HepG2 (cell line): ENCODE measurements at regions of chr7 and their contacts with region 1.

Region 1: DNA sequence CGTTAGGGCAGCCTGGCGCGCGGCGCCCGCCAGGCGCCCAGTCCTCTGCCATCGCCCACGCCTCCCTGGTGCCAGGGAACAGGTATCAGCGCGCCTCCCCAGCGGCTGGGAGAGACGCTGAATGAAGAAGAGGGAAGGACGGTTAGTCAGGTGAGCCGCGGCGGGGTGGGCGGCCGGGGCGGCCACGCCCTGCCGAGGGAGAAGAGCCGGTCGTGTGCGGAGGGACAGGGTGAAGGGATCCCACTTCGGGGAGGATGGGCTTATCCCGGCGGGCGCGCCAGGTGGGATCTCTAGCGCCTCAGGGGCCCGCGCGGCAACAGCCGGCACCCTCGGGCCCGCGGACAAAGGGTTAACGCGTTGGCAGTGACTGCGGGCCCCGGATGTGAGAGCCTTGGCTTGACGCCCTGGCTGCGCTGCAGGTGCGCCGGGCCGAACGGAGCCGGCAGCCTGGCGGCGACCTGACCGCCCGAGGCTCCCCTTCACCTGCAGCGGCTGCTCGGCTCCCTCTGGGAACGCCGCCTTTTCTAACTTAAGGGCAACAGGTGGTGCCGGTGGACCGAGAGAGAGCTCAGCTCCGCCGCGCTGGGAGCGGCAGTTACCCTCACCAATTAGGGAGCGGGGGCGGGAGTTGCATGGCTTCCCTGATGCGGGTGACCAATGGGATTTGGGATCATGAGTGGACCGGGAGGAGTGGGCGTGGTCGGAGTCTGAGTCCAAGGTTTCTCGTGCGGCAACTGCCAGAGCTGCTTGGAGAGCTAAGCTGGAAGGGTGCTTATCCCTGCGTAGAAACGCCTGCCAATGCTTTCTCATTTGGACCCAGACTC is at the start of gene ARL4A:
- DNase-seq: peak; percentile 98
- ATAC-seq: peak; percentile 96
- H3K4me3 ChIP-seq: peak within 1 kb of the TSS; percentile 86 to 95 (median 92)
- H3K27ac ChIP-seq: peak within 1 kb of the TSS; percentile 92
- H3K4me1 ChIP-seq: peaks cover 42% of the 10 kb centered on the region
- H3K27me3 ChIP-seq: no peaks in the 10 kb centered on the region
- CTCF ChIP-seq: peak; percentile 91
- EP300 ChIP-seq: no peak; a peak in 1 of 4 replicates
- POLR2A ChIP-seq: peak; percentile 97 to 98
- RAD21 ChIP-seq: peak; percentile 79
- total RNA-seq, gene ARL4A: 25.6 and 29.3 TPM in 2 replicates

Region 2: GRCh38 chr7:12524794-12525386 is 162.2 kb before region 1 on chr7:
- CTCF ChIA-PET with region 1: no interaction called
- POLR2A ChIA-PET with region 1: no interaction called
- in situ Hi-C with region 1: no loop called
- intact Hi-C with region 1: loop called (anchors 2 kb)
- DNase-seq: peak; percentile 33
- ATAC-seq: no peak
- H3K4me3 ChIP-seq: no peak overlapping the region
- H3K27ac ChIP-seq: no peak overlapping the region
- H3K4me1 ChIP-seq: no peaks in the 10 kb centered on the region
- H3K27me3 ChIP-seq: no peaks in the 10 kb centered on the region
- CTCF ChIP-seq: peak; percentile 62
- EP300 ChIP-seq: no peak
- POLR2A ChIP-seq: no peak
- RAD21 ChIP-seq: no peak

Region 3: GRCh38 chr7:12942609-12943008 is 255.5 kb after region 1 on chr7:
- CTCF ChIA-PET with region 1: no interaction called
- POLR2A ChIA-PET with region 1: interaction called, 5 read pairs
- in situ Hi-C with region 1: no loop called
- intact Hi-C with region 1: loop called (anchors 2 kb)
- DNase-seq: peak; percentile 92
- ATAC-seq: peak; percentile 97
- H3K4me3 ChIP-seq: peak overlapping the region; percentile 1 to 40 (median 19); a peak in 2 of 6 replicates
- H3K27ac ChIP-seq: peak overlapping the region; percentile 71
- H3K4me1 ChIP-seq: peaks cover 52% of the 10 kb centered on the region
- H3K27me3 ChIP-seq: no peaks in the 10 kb centered on the region
- CTCF ChIP-seq: no peak
- EP300 ChIP-seq: peak in 1 of 2 experiments; percentile 92; a peak in 2 of 4 replicates
- POLR2A ChIP-seq: no peak
- RAD21 ChIP-seq: no peak

Region 4: DNA sequence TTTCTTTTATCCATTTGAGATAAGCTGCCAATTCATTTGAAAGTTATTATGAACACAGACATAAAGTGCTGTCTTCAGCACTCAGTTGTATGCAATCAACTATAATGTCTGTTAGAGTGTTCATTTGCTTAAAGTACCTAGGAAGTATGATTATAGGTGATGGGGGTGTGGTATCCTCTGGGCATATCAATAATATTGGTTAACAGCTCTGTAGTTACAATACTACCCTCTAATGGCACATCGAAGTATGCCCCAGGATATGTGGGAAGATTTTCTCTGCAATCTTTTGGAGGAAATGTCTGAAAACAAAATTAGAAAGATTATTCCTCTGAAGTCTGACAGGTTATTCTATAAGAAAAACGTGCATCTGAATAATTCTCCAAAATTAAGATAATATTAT is 430.0 kb after region 1 on chr7:
- CTCF ChIA-PET with region 1: interaction called, 3 read pairs
- POLR2A ChIA-PET with region 1: interaction called, 4 read pairs
- in situ Hi-C with region 1: loop called (anchors 25 kb)
- intact Hi-C with region 1: loop called (anchors 1 kb)
- DNase-seq: peak; percentile 35
- ATAC-seq: peak; percentile 69
- H3K4me3 ChIP-seq: no peak overlapping the region
- H3K27ac ChIP-seq: no peak overlapping the region
- H3K4me1 ChIP-seq: peaks cover 10% of the 10 kb centered on the region; the same call in 1 of the 2 replicates
- H3K27me3 ChIP-seq: no peaks in the 10 kb centered on the region
- CTCF ChIP-seq: peak; percentile 70
- EP300 ChIP-seq: no peak
- POLR2A ChIP-seq: no peak
- RAD21 ChIP-seq: peak; percentile 65; the same call in 1 of the 2 replicates

Region 5: DNA sequence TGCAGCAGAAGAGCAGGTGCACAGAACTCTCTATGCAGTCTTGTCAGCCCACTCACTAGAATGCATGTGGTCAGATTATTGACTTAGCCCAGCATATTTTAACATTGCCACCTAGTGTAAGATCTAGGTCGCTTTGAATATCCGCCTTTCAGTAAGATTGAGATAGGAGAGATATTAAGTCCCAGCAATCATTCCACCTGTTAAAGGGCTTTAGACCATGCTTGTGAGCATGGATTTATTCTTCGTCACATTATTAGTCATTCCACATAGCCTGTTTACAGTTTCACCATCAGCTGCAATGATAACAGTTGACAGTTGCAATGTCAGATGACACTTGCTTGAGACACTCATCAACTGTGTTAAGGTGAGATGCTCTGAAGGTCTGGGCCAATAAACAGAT is 492.0 kb after region 1 on chr7:
- CTCF ChIA-PET with region 1: no interaction called
- POLR2A ChIA-PET with region 1: interaction called, 5 read pairs
- in situ Hi-C with region 1: loop called (anchors 10 kb)
- intact Hi-C with region 1: loop called (anchors 1 kb)
- DNase-seq: peak; percentile 30
- ATAC-seq: peak; percentile 84
- H3K4me3 ChIP-seq: no peak overlapping the region
- H3K27ac ChIP-seq: no peak overlapping the region
- H3K4me1 ChIP-seq: peaks cover 27% of the 10 kb centered on the region
- H3K27me3 ChIP-seq: no peaks in the 10 kb centered on the region
- CTCF ChIP-seq: peak; percentile 52
- EP300 ChIP-seq: no peak
- POLR2A ChIP-seq: no peak
- RAD21 ChIP-seq: no peak

Region 6: GRCh38 chr7:13262929-13263530 is 575.9 kb after region 1 on chr7:
- CTCF ChIA-PET with region 1: interaction called, 11 read pairs
- POLR2A ChIA-PET with region 1: interaction called, 3 read pairs
- in situ Hi-C with region 1: loop called (anchors 5 kb)
- intact Hi-C with region 1: loop called (anchors 1 kb)
- DNase-seq: peak; percentile 32
- ATAC-seq: peak; percentile 57
- H3K4me3 ChIP-seq: no peak overlapping the region
- H3K27ac ChIP-seq: no peak overlapping the region
- H3K4me1 ChIP-seq: no peaks in the 10 kb centered on the region
- H3K27me3 ChIP-seq: no peaks in the 10 kb centered on the region
- CTCF ChIP-seq: peak; percentile 64
- EP300 ChIP-seq: no peak
- POLR2A ChIP-seq: no peak
- RAD21 ChIP-seq: peak; percentile 64